GM18951 (cell line): ENCODE measurements at regions of chr9 and their contacts with region 1.

Region 1: DNA sequence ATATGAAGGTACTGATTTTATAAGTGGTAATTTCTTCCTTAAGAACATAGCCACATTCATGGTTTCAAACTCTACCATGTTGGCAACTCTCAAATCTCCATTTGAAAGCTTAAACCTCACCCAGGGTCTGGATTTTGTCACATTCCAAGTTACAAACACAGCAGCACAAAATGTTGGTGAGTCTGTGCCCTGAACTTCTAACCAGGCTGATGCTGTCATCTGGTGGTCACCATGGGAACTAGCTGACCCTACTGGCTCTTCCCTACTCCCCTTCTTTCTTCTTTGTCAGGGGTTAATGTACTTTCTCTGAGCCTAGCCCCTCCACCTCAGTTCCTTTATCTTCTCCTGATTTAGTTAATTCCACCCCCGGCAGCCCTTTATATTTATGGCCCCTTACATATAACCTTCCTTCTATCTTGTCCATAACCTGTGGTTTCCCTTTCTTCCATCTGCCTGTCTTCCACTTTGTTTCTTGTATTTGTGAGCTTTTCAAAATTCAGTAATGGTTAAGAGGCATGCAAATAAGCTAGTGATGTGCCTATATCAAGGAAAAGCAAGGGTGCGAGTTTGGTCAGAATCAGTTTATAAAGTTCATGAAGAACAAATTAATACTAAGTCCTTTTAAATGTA is 35.9 kb downstream of the TGFBR1 start:
- POLR2A ChIP-seq: no peak

Region 2: GRCh38 chr9:98860871-98861293 is 279.9 kb before region 1 on chr9:
- in situ Hi-C with region 1: loop called (anchors 25 kb)
- POLR2A ChIP-seq: no peak

Region 3: DNA sequence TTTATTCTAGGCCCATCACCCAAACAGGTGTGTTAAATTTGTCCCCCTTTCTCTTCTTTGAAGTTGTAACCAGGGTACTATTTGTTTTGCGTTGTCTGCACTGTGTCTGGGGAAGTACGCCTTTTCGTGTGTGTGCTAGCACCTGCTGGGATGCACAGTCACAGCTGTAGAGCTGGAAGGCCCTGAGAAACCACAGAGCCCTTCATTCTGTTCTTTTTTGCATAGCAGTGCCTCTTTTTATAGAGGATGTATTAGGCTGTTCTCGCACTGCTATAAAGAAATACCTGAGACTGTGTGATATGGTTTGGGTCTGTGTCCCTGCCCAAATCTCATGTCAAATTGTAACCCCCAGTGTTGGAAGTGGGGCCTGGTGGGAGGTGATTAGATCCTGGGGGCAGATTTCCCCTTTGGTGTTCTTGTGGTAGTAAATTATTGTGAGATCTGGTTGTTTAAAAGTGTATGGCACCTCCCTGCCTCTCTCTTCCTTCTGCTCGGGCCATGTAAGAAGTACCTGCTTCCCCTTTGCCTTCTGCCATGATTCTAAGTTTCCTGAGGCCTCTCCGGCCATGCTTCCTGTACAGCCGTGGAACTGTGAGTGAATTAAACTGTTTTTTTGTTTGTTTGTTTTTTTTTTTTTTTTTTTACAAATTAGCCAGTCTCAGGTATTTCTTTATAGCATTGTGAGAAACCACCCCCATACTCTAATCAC is 95.3 kb after region 1 on chr9:
- in situ Hi-C with region 1: no loop called
- POLR2A ChIP-seq: peak; percentile 26

Region 4: DNA sequence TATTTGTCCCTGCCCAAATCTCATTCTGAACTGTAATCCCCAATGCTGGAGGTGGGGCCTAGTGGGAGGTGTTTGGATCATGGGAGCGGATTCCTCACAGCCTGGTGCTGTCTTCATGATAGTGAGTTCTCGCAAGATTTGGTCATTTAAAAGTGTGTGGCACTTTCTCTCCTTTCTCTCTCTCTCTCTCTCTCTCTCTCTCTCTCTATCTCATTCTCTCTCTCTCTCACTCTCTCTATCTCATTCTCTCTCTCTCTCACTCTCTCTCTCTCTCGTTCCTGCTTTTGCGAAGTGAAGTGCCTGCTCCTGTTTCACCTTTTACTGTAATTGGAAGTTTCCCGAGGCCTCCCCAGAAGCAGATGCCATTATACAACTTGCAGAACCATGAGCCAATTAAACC is 473.5 kb after region 1 on chr9:
- in situ Hi-C with region 1: no loop called
- POLR2A ChIP-seq: no peak